ENCODE measurements at regions of chr7 and their contacts with region 1.

Region 1: DNA sequence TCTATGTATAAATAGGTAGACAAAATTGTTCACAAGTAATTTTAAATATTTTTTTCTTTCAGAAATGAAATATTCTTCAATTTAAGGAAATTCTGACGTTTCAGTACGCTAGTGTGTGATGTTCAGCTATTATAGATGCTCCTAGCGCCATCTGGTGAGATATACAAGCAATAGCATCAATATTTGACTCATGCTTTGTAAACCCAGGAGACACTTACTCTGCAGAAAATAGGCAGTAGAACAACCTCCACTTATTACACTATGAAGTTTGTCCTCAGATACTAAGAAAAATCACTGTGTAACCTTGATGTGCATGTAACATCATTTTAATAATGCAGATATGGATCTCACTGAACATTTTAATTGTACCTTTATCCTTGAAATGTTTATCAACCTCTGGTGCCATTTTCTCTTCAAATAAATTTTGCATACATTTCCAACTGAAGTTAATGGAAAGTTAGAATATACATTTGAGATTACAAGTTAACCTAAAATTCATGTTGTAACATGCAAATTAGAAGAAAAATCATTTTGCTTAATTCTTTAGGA is 151.5 kb upstream of the FAM3C start:
- DNase-seq: no peak
- H3K4me3 ChIP-seq: no peak overlapping the region
- CTCF ChIP-seq: peak; percentile 59

Region 2: GRCh38 chr7:121351679-121352078 is 195.9 kb before region 1 on chr7:
- CTCF ChIA-PET with region 1: interaction called, 11 read pairs
- POLR2A ChIA-PET with region 1: no interaction called
- DNase-seq: no peak
- H3K4me3 ChIP-seq: no peak overlapping the region
- CTCF ChIP-seq: no peak

Region 3: DNA sequence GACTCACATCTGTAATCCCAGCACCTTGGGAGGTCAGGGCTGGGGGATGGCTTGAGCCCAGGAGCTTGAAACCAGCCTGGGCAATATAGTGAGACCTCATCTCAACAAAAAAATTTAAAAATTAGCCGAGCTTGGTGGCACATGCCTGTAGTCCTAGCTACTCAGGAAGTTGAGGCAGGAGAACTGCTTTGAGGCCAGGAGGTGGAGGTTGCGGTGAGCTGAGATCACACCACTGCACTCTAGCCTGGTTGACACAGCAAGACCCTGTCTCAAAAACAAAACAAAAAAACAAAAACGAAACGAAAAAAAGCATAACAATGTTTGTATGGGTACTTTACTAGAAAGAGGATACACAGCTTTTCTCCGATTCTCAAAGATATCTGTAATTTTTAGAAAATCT is 187.1 kb before region 1 on chr7:
- CTCF ChIA-PET with region 1: interaction called, 51 read pairs
- POLR2A ChIA-PET with region 1: no interaction called
- DNase-seq: no peak
- H3K4me3 ChIP-seq: no peak overlapping the region
- CTCF ChIP-seq: no peak

Region 4: DNA sequence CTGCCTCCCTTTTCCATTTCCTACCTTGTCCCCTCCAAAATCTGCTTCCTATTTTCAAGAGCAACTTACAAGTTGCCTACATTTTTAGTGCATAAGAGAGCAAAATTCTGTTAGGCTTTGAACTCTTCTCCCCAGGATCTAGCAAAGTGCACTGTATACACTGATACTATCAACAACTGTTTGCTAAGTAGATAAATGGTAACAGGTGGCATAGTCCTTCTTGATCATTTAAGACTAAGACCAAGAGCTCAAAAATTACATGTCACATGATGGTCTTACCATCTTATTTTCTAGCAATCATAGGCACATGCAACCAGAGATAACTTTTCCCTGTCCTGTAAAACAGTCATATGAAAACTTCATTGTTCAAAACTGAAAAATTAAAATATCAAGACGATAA is 167.7 kb before region 1 on chr7:
- CTCF ChIA-PET with region 1: interaction called, 226 read pairs
- POLR2A ChIA-PET with region 1: no interaction called
- DNase-seq: no peak
- H3K4me3 ChIP-seq: no peak overlapping the region
- CTCF ChIP-seq: no peak

Region 5: DNA sequence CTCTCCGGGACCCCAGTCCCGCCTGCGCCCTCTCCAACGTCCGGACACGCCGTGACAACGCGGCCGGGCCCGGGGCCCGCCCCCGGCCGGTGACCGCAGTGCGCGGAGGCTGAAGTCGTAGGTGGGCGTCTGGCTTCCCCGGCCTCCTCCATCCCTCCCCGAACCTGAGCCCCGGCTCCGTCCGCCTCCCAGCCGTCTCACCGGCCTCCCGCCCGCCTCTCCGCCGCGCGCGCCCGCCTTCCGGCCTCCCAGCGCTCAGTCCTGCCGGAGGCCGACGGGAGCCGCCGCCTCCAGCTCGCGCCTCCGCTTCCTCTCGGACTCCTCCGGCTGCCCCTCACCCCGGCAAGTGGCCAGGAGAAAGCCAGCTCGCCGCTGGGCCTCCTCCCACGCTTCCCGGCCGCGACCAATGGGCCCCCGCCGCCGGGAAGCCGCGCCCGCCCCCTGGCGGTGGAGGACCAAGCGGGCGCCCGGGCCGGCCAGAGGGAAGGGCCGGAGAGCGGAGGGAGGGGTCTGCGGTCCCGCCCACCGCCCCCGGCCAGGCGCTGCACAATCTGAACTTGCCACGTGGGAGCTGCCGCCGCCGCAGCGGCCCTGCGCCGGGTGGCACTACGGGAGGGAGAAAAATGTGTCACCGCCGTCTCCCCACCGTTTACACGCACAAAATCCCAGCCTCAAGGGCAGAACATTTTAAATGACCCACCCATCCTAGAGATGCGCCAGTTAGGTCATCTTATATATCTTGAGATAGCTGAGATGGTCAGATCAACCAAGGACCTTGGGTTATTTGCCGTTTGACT is 151.5 kb before region 1 on chr7 and contains the start of gene FAM3C:
- CTCF ChIA-PET with region 1: interaction called, 35 read pairs
- POLR2A ChIA-PET with region 1: interaction called, 6 read pairs
- DNase-seq: peak; percentile 33
- H3K4me3 ChIP-seq: peak within 1 kb of the TSS; percentile 73
- CTCF ChIP-seq: peak; percentile 82

Region 6: GRCh38 chr7:121537031-121537430 is 10.6 kb before region 1 on chr7:
- CTCF ChIA-PET with region 1: interaction called, 11 read pairs
- POLR2A ChIA-PET with region 1: no interaction called
- DNase-seq: no peak
- H3K4me3 ChIP-seq: no peak overlapping the region
- CTCF ChIP-seq: no peak

Region 7: DNA sequence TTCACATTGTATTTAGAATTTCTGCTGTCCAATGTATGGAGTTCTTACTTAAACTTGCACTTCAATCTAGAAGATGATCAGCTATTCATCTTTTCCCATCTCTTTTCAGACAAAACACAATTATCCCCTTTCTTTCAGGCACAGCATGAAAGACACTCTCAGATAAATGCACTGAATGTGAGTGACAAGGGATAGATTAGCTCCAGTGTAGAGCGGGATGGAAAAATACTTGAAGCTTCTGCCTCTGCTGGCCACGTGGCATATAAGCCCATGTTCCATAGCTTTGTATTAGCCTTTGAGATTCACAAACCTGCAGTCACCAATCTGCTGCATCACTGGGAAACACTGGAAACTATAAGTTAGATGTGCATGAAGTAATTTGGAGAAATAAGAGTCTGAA is 10.7 kb after region 1 on chr7:
- CTCF ChIA-PET with region 1: interaction called, 30 read pairs
- POLR2A ChIA-PET with region 1: no interaction called
- DNase-seq: no peak
- H3K4me3 ChIP-seq: no peak overlapping the region
- CTCF ChIP-seq: no peak